ENCODE measurements at regions of chr17 and their contacts with region 1.

Region 1: GRCh38 chr17:80008383-80008840 is 27.3 kb downstream of the TBC1D16 start:
- DNase-seq: peak; percentile 77 to 91
- ATAC-seq: peak; percentile 78 to 91
- H3K4me3 ChIP-seq: no peak overlapping the region
- H3K27ac ChIP-seq: peak overlapping the region; percentile 7 to 16; a peak in 3 of 6 replicates
- H3K4me1 ChIP-seq: peaks cover 15% of the 10 kb centered on the region
- CTCF ChIP-seq: peak; percentile 89
- EP300 ChIP-seq: no peak
- POLR2A ChIP-seq: no peak
- RAD21 ChIP-seq: peak; percentile 64 to 65

Region 2: GRCh38 chr17:79810130-79811010 is 198.0 kb before region 1 on chr17:
- CTCF ChIA-PET with region 1: interaction called, 10 read pairs
- POLR2A ChIA-PET with region 1: no interaction called
- DNase-seq: peak; percentile 90 to 92
- ATAC-seq: peak; percentile 55 to 80
- H3K4me3 ChIP-seq: peak overlapping the region; percentile 51
- H3K27ac ChIP-seq: peak overlapping the region; percentile 95 to 99
- H3K4me1 ChIP-seq: peaks cover 40% of the 10 kb centered on the region
- CTCF ChIP-seq: no peak
- EP300 ChIP-seq: no peak
- POLR2A ChIP-seq: peak; percentile 33; the same call in 1 of the 2 replicates
- RAD21 ChIP-seq: no peak

Region 3: DNA sequence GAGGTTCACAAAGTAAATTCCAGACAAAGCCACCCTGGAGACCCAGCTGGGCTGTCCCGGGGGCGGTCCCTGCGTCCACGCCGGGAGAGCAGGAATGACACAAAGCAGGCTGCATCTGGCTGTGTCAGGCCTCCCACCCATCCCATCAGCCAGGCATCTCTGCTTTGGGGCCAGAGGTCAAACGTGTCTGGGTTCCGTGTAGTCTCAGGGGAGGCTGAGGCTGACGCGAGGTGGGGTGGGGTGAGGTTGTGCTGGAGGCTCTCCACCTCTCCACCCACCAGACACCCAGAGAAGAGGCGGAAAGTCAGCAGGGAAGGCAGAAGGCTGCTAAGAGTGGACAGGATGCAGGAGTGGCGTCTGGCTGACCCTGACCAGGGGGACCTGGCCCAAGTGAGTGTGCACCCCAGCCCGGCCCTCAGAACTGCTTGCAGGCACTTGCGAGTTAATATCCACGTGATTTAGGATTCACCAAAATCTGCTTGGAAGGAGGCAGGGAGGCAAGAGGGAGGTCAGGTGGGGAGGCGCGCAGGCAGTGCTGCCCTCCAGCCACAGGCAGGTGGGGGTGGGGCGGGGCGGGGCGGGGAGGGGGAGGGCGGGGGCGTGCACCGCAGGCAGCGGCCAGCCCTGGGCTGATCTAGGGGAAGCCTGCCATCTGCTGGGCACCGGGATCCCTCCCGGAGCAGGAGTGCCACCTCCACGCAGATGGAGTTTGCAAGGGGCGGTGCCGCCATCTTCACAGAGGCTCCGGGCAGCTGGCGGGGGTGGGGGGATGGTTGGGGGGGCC is 17.1 kb before region 1 on chr17:
- CTCF ChIA-PET with region 1: interaction called, 154 read pairs
- POLR2A ChIA-PET with region 1: interaction called, 3 read pairs
- DNase-seq: peak; percentile 88 to 97
- ATAC-seq: peak; percentile 69 to 90
- H3K4me3 ChIP-seq: peak overlapping the region; percentile 51
- H3K27ac ChIP-seq: peak overlapping the region; percentile 89 to 95
- H3K4me1 ChIP-seq: peaks cover 83% of the 10 kb centered on the region
- CTCF ChIP-seq: peak; percentile 88
- EP300 ChIP-seq: no peak; a peak in 1 of 5 replicates
- POLR2A ChIP-seq: no peak
- RAD21 ChIP-seq: peak; percentile 86 to 99

Region 4: GRCh38 chr17:80035943-80036714 is 27.7 kb after region 1 on chr17 and contains the start of gene CCDC40:
- CTCF ChIA-PET with region 1: interaction called, 138 read pairs
- POLR2A ChIA-PET with region 1: interaction called, 3 read pairs
- DNase-seq: peak; percentile 84 to 89
- ATAC-seq: peak; percentile 86 to 94
- H3K4me3 ChIP-seq: peak within 1 kb of the TSS; percentile 89
- H3K27ac ChIP-seq: peak within 1 kb of the TSS; percentile 83 to 93
- H3K4me1 ChIP-seq: peaks cover 8% of the 10 kb centered on the region
- CTCF ChIP-seq: no peak
- EP300 ChIP-seq: no peak
- POLR2A ChIP-seq: peak; percentile 81
- RAD21 ChIP-seq: no peak
- polyA plus RNA-seq, gene CCDC40: 4.3 and 5.9 TPM in 2 replicates

Region 5: DNA sequence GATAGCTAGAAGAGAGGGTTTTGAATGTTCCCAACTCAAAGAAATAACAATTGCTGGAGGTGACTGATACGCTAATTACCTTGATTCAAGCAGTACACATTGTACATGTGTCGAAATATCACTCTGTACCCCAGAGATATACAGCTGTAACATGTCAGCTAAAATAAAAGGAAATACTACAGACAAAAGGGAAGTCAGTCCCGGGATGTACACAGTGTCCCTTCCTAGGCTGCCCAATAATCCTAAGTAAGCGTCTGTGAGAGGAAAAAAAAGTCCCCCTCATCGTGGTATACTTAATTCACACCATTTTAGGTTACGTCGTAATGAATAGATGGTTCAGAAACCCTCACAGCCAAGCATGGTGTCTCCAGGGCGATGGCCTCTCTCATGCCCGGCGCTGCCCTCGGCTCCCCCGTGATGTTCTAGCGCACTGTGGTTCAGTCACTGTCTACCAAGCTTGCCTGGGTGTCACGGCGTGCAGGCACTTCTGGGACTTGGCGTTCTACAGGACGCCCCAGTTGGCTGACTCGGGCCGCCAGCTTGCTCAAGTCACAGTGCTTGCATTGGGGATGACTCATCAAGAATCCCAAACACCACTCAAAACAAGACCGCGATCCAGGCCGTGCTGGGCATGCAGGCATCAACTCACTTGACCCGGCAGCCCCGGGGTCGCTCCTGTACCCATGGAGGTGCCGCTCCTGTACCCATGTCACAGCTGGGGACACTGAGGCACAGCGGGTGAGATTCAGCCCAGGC is 55.6 kb after region 1 on chr17:
- CTCF ChIA-PET with region 1: interaction called, 12 read pairs
- POLR2A ChIA-PET with region 1: no interaction called
- DNase-seq: peak; percentile 83 to 93
- ATAC-seq: peak; percentile 88 to 92
- H3K4me3 ChIP-seq: no peak overlapping the region
- H3K27ac ChIP-seq: peak overlapping the region; percentile 70 to 88
- H3K4me1 ChIP-seq: peaks cover 17% of the 10 kb centered on the region
- CTCF ChIP-seq: no peak
- EP300 ChIP-seq: no peak
- POLR2A ChIP-seq: no peak
- RAD21 ChIP-seq: no peak

Region 6: DNA sequence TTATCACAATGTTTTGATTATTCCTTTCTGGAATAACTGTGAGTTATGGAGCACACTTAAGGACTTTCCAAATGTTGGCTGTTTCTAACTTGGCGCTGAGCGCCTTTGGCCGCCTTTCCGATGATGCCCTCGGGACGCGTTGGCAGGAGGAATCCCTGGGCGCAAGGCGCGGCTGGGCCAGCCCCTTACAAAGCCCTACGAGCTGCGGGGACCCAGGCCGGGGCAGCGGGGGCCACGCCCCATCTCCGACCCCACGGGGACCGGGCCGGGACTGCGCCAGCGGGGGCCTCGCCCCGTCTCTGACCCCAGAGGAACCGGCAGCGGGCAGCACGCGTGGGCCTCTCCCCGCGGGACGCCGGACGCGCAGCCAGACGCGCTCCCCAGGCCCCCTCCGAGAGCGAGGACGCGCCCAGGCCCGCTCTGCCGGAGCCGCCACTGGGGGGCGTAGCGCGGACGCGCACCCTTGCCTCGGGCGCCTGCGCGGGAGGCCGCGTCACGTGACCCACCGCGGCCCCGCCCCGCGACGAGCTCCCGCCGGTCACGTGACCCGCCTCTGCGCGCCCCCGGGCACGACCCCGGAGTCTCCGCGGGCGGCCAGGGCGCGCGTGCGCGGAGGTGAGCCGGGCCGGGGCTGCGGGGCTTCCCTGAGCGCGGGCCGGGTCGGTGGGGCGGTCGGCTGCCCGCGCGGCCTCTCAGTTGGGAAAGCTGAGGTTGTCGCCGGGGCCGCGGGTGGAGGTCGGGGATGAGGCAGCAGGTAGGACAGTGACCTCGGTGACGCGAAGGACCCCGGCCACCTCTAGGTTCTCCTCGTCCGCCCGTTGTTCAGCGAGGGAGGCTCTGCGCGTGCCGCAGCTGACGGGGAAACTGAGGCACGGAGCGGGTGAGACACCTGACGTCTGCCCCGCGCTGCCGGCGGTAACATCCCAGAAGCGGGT is 92.9 kb after region 1 on chr17 and contains the start of gene GAA:
- CTCF ChIA-PET with region 1: interaction called, 12 read pairs
- POLR2A ChIA-PET with region 1: no interaction called
- DNase-seq: peak; percentile 84 to 91
- ATAC-seq: peak; percentile 80 to 89
- H3K4me3 ChIP-seq: peak within 1 kb of the TSS; percentile 88
- H3K27ac ChIP-seq: peak within 1 kb of the TSS; percentile 90 to 94
- H3K4me1 ChIP-seq: peaks cover 11% of the 10 kb centered on the region
- CTCF ChIP-seq: peak; percentile 99
- EP300 ChIP-seq: no peak
- POLR2A ChIP-seq: peak; percentile 93
- RAD21 ChIP-seq: peak; percentile 18 to 68; a peak in 3 of 5 replicates
- polyA plus RNA-seq, gene GAA: 5.7 and 9.5 TPM in 2 replicates

Region 7: GRCh38 chr17:80133626-80133970 is 125.2 kb after region 1 on chr17:
- CTCF ChIA-PET with region 1: no interaction called
- POLR2A ChIA-PET with region 1: no interaction called
- DNase-seq: no peak
- ATAC-seq: peak in 1 of 2 experiments; percentile 13; a peak in 3 of 6 replicates
- H3K4me3 ChIP-seq: no peak overlapping the region
- H3K27ac ChIP-seq: no peak overlapping the region
- H3K4me1 ChIP-seq: no peaks in the 10 kb centered on the region
- CTCF ChIP-seq: no peak
- EP300 ChIP-seq: no peak
- POLR2A ChIP-seq: no peak
- RAD21 ChIP-seq: no peak

Measured in A549 (cell line).